ENCODE measurements at regions of chr3 and their contacts with region 1.

Region 1: GRCh38 chr3:128426128-128426921 is 40.4 kb downstream of the DNAJB8 start:
- DNase-seq: peak; percentile 77
- ATAC-seq: peak; percentile 81
- H3K4me3 Mint-ChIP-seq: no peak overlapping the region
- H3K27ac Mint-ChIP-seq: no peak overlapping the region
- H3K4me1 Mint-ChIP-seq: peaks cover 22% of the 10 kb centered on the region
- H3K27me3 Mint-ChIP-seq: peaks cover 57% of the 10 kb centered on the region
- CTCF ChIP-seq: peak; percentile 79

Region 2: GRCh38 chr3:128348805-128349531 is 77.4 kb before region 1 on chr3:
- CTCF ChIA-PET with region 1: no interaction called
- POLR2A ChIA-PET with region 1: no interaction called
- DNase-seq: no peak
- ATAC-seq: peak; percentile 82
- H3K4me3 Mint-ChIP-seq: no peak overlapping the region
- H3K27ac Mint-ChIP-seq: peak overlapping the region; percentile 90
- H3K4me1 Mint-ChIP-seq: peaks cover 25% of the 10 kb centered on the region
- H3K27me3 Mint-ChIP-seq: no peaks in the 10 kb centered on the region
- CTCF ChIP-seq: no peak

Region 3: DNA sequence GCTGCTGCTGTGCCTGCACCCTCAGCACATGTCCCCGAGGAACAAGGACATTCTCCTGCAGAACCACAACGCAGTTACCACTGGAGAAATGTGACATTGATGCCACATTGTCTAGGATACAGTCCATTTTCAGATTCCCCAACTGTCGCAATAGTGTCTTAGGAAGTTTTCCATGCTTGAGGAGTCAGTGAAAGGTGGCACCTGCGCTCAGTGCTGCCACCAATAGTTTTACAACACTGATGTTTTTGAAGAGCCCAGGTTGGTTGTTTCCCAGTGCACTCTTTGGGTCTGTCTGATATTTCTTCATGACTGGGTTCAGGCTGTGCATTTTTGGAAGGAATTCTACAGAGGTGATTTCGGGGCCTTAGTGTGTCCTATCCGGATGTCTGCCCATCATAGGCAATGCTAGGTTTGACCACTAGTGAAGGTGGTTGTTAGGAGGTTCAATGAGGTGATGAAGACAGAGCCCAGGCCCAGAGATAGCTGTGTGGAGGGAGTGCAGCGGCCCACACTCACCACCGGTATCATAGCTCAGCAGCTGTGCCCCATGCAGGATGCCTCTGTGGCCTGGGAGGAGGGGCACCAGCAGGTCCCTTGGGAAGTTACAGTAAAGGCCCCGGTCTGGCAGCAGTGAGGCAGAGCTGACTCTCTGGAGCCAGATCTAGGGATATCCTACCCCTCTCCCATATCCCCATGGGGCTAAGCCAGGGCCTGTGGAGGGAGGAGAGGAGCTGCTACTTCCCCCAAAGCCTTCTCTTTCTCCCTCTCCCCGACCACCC is 56.3 kb before region 1 on chr3:
- CTCF ChIA-PET with region 1: no interaction called
- POLR2A ChIA-PET with region 1: no interaction called
- DNase-seq: no peak
- ATAC-seq: no peak; the same call in 1 of the 2 replicates
- H3K4me3 Mint-ChIP-seq: no peak overlapping the region
- H3K27ac Mint-ChIP-seq: peak overlapping the region; percentile 76; the same call in 1 of the 2 replicates
- H3K4me1 Mint-ChIP-seq: peaks cover 11% of the 10 kb centered on the region
- H3K27me3 Mint-ChIP-seq: no peaks in the 10 kb centered on the region
- CTCF ChIP-seq: no peak

Region 4: GRCh38 chr3:128409624-128410581 is 16.4 kb before region 1 on chr3:
- CTCF ChIA-PET with region 1: interaction called, 10 read pairs
- POLR2A ChIA-PET with region 1: no interaction called
- DNase-seq: no peak
- ATAC-seq: no peak
- H3K4me3 Mint-ChIP-seq: no peak overlapping the region
- H3K27ac Mint-ChIP-seq: no peak overlapping the region
- H3K4me1 Mint-ChIP-seq: peaks cover 23% of the 10 kb centered on the region
- H3K27me3 Mint-ChIP-seq: no peaks in the 10 kb centered on the region
- CTCF ChIP-seq: no peak

Region 5: GRCh38 chr3:128438488-128439072 is 12.3 kb after region 1 on chr3:
- CTCF ChIA-PET with region 1: interaction called, 10 read pairs
- POLR2A ChIA-PET with region 1: no interaction called
- DNase-seq: peak; percentile 60
- ATAC-seq: peak; percentile 77
- H3K4me3 Mint-ChIP-seq: no peak overlapping the region
- H3K27ac Mint-ChIP-seq: no peak overlapping the region
- H3K4me1 Mint-ChIP-seq: peaks cover 29% of the 10 kb centered on the region
- H3K27me3 Mint-ChIP-seq: peaks cover 39% of the 10 kb centered on the region
- CTCF ChIP-seq: peak; percentile 43

Region 6: DNA sequence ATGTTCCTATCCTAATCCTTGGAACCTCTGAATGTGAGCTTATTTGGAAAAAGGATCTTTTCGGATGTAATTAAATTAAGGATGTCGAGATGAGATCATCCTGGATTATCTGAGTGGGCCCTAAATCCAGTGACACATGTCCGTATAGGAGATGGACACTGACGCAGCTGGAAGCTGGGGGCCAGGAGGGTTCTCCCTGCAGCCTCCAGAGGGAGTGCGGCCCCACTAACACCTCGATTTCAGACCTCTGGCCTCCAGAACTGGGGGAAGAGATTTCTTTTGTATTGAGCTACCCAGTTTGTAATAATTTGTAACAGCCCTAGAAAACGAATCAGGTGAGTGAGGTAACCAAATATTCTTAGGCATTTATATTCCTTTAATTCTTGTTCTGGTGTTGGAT is 37.9 kb after region 1 on chr3:
- CTCF ChIA-PET with region 1: interaction called, 20 read pairs
- POLR2A ChIA-PET with region 1: no interaction called
- DNase-seq: no peak
- ATAC-seq: peak; percentile 40
- H3K4me3 Mint-ChIP-seq: no peak overlapping the region
- H3K27ac Mint-ChIP-seq: no peak overlapping the region
- H3K4me1 Mint-ChIP-seq: no peaks in the 10 kb centered on the region
- H3K27me3 Mint-ChIP-seq: peaks cover 36% of the 10 kb centered on the region
- CTCF ChIP-seq: no peak

Region 7: DNA sequence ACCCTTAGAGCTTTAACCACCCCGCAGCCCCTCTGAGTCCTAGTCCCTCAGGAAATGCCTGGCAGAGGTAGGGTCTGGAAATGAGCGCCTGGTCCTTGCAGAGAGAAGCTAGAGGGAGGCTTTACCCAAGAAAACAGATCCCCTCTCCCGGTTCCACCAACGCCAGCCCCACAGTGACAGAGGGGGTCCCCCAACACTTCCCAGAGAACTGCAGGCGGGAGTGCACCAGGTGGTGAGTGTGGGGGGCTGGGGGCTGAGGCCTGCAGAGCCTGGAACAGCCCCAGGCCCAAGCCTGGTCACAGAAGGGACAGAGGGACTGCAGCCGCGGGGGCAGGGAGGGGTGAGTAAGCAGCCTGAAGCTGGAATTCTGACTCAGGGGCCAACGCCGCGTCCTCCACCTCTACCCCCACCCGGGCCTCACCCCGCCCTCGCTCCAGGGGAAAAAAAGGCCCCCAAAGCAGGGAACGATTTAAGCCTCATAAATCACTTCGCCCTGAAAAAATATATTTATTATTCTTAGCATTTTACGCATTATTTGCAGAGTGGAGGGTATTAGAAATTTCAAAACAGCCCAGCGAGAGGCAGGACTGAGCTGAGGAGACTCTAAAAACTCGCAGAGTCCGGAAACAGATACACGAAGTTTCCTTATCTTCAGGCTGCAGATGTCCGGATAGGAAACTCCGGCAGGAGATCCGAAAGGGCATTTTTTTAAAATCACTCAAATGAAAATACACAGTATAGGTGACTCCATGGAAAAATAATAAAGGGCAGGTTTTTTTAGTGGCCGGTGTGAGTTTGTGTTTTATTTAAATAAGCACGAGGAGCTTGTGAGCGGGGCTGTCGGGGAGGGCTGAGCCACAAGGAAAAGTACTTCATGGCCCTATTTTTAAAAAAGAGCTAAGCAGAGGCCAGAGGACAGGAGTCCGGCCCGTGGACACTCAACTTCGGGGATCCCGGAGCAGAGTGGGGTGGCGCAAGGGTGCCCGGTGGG is 56.6 kb after region 1 on chr3:
- CTCF ChIA-PET with region 1: interaction called, 36 read pairs
- POLR2A ChIA-PET with region 1: interaction called, 4 read pairs
- DNase-seq: peak; percentile 47
- ATAC-seq: no peak
- H3K4me3 Mint-ChIP-seq: peak overlapping the region; percentile 57
- H3K27ac Mint-ChIP-seq: no peak overlapping the region
- H3K4me1 Mint-ChIP-seq: peaks cover 64% of the 10 kb centered on the region
- H3K27me3 Mint-ChIP-seq: peaks cover 100% of the 10 kb centered on the region
- CTCF ChIP-seq: no peak

Region 8: GRCh38 chr3:128780101-128780837 is 353.9 kb after region 1 on chr3:
- CTCF ChIA-PET with region 1: no interaction called
- POLR2A ChIA-PET with region 1: no interaction called
- DNase-seq: no peak
- ATAC-seq: no peak
- H3K4me3 Mint-ChIP-seq: no peak overlapping the region
- H3K27ac Mint-ChIP-seq: peak overlapping the region; percentile 8
- H3K4me1 Mint-ChIP-seq: peaks cover 43% of the 10 kb centered on the region
- H3K27me3 Mint-ChIP-seq: no peaks in the 10 kb centered on the region
- CTCF ChIP-seq: no peak